ENCODE measurements at regions of chr7 and their contacts with region 1.

Region 1: GRCh38 chr7:106375499-106375898 is 90.7 kb upstream of the NAMPT start:
- DNase-seq: no peak
- ATAC-seq: no peak
- H3K4me3 ChIP-seq: no peak overlapping the region
- H3K27ac ChIP-seq: no peak overlapping the region
- H3K4me1 ChIP-seq: no peaks in the 10 kb centered on the region; the same call in 1 of the 2 replicates
- H3K27me3 ChIP-seq: peaks cover 4% of the 10 kb centered on the region; the same call in 1 of the 2 replicates
- CTCF ChIP-seq: no peak
- POLR2A ChIP-seq: no peak
- RAD21 ChIP-seq: no peak

Region 2: DNA sequence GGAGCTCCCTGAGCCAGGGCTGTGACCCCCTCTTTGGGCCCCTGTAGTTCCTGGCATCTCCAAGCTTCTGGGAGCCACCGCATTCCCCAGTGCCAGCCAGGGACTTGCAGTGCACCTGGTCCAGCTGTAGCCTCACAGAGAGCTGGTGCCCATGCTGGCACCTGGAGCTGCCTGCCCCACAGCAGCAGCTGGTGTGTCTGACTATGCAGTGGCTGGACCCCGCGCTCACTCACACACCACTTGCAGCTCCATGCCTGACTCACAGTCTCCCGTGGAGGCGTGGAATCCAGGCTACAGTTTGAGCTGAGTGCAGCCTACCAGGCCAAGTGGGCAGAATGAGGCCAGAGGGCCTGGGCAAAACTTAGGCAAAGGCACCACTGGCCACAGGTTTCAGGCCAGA is 11.5 kb after region 1 on chr7:
- CTCF ChIA-PET with region 1: no interaction called
- POLR2A ChIA-PET with region 1: no interaction called
- dilution Hi-C with region 1: no loop called
- in situ Hi-C with region 1: no loop called
- intact Hi-C with region 1: loop called (anchors 1 kb)
- DNase-seq: no peak
- ATAC-seq: no peak
- H3K4me3 ChIP-seq: no peak overlapping the region
- H3K27ac ChIP-seq: no peak overlapping the region
- H3K4me1 ChIP-seq: no peaks in the 10 kb centered on the region
- H3K27me3 ChIP-seq: peaks cover 12% of the 10 kb centered on the region
- CTCF ChIP-seq: no peak
- POLR2A ChIP-seq: no peak
- RAD21 ChIP-seq: no peak

Region 3: DNA sequence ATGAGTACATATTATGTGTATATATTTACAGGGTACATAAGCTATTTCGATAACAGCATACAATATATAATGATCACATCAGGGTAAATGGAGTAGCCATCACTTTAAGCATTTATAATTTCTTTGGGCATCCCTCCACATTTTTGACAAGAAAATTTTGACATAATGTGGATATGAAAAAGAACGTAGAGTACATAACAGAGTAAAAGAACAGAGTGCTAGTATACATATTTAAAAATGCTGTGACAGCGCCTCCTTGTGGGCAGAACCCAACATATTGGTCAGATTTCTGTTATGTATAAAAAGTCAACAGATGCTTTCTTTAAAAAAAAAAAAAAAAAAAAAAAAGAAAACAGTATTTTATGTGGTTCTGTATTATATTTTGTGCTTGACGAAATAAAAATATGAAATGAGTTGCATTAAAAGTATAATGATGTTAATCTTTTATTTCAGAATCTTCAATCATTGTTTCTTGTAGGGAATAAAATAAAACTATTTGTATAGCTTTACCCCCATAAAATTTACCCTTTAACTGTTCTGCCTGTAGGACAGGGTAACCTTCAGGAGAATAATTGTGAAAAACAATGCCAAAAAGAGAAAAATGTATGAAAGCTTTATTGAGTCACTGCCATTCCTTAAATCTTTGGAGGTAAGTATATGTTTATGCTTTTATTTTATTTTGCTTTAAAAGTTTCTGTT is 775.0 kb after region 1 on chr7:
- CTCF ChIA-PET with region 1: no interaction called
- POLR2A ChIA-PET with region 1: no interaction called
- dilution Hi-C with region 1: no loop called
- in situ Hi-C with region 1: no loop called
- intact Hi-C with region 1: no loop called
- DNase-seq: peak; percentile 78
- ATAC-seq: peak; percentile 58; the same call in 1 of the 2 replicates
- H3K4me3 ChIP-seq: no peak overlapping the region
- H3K27ac ChIP-seq: no peak overlapping the region
- H3K4me1 ChIP-seq: peaks cover 6% of the 10 kb centered on the region
- H3K27me3 ChIP-seq: no peaks in the 10 kb centered on the region
- CTCF ChIP-seq: peak; percentile 74
- POLR2A ChIP-seq: no peak
- RAD21 ChIP-seq: peak; percentile 75